ENCODE measurements at regions of chr7 and their contacts with region 1.

Region 1: GRCh38 chr7:37421861-37422500 is 26.7 kb downstream of the ELMO1 start:
- DNase-seq: no peak
- ATAC-seq: no peak
- H3K4me3 ChIP-seq: no peak overlapping the region
- H3K4me3 Mint-ChIP-seq: no peak overlapping the region
- H3K27ac ChIP-seq: no peak overlapping the region
- H3K27ac Mint-ChIP-seq: no peak overlapping the region
- H3K4me1 ChIP-seq: peaks cover 23 to 34% of the 10 kb centered on the region in 2 donors
- H3K4me1 Mint-ChIP-seq: peaks cover 62% of the 10 kb centered on the region
- H3K27me3 ChIP-seq: no peaks in the 10 kb centered on the region
- H3K27me3 Mint-ChIP-seq: no peaks in the 10 kb centered on the region
- CTCF ChIP-seq: no peak

Region 2: DNA sequence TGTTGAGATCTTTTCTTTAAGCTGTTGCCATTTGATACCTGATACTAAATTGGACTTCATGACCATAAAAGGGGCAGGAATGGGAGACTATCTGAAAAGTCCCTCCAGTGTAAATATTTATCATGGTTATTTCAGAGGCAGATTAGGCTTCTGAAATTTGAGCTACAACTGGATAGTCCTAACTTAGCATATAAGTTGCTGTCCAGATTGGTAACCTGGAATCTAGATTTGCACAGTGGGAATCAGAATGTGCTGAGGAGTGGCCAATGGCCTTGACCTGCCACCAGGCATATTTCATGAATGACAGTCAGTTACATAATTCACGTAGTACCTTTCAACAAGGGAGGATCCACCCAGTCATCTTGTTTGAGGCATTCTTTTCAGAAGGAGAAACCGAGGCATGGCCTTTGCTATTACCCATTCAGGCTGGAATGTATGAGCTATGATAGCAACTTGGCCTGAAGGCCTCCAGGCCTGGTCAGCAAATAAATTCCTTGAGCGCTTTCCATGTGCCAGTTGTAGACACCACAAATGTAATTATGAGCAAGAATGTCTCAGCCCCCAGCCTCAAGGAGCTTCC is 1188.9 kb before region 1 on chr7:
- CTCF ChIA-PET with region 1: no interaction called
- POLR2A ChIA-PET with region 1: no interaction called
- intact Hi-C with region 1: no loop called
- DNase-seq: no peak
- ATAC-seq: no peak
- H3K4me3 ChIP-seq: no peak overlapping the region
- H3K4me3 Mint-ChIP-seq: no peak overlapping the region
- H3K27ac ChIP-seq: no peak overlapping the region
- H3K27ac Mint-ChIP-seq: no peak overlapping the region
- H3K4me1 ChIP-seq: no peaks in the 10 kb centered on the region
- H3K4me1 Mint-ChIP-seq: no peaks in the 10 kb centered on the region
- H3K27me3 ChIP-seq: no peaks in the 10 kb centered on the region
- H3K27me3 Mint-ChIP-seq: no peaks in the 10 kb centered on the region
- CTCF ChIP-seq: no peak

Region 3: DNA sequence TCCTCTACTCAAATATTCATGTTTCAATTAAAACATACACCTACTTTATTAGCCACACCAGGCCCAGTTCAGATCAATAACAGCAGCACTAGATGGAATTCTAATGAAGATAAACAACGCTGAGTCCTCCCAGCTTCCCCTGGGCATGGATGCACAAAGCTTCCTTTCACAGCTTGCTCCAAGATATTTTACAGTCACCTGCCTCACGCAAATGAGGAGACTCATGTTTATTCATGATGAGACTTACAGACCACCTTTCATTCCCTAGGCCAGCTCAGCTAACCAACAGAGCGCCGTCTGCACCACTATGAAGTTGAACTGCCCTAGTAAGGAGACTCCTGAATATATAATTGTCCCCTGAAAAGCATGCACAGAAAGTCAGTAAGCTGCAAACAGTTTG is 414.7 kb before region 1 on chr7:
- CTCF ChIA-PET with region 1: no interaction called
- POLR2A ChIA-PET with region 1: no interaction called
- intact Hi-C with region 1: no loop called
- DNase-seq: no peak
- ATAC-seq: no peak
- H3K4me3 ChIP-seq: no peak overlapping the region
- H3K4me3 Mint-ChIP-seq: no peak overlapping the region
- H3K27ac ChIP-seq: no peak overlapping the region
- H3K27ac Mint-ChIP-seq: no peak overlapping the region
- H3K4me1 ChIP-seq: no peaks in the 10 kb centered on the region
- H3K4me1 Mint-ChIP-seq: no peaks in the 10 kb centered on the region
- H3K27me3 ChIP-seq: no peaks in the 10 kb centered on the region
- H3K27me3 Mint-ChIP-seq: no peaks in the 10 kb centered on the region
- CTCF ChIP-seq: no peak

Region 4: GRCh38 chr7:37440738-37441385 is 18.9 kb after region 1 on chr7:
- CTCF ChIA-PET with region 1: interaction called, 3 read pairs
- POLR2A ChIA-PET with region 1: no interaction called
- intact Hi-C with region 1: loop called (anchors 1 kb)
- DNase-seq: peak; percentile 32
- ATAC-seq: peak; percentile 67
- H3K4me3 ChIP-seq: peak overlapping the region in 1 of 5 experiments; percentile 3
- H3K4me3 Mint-ChIP-seq: peak overlapping the region; percentile 66
- H3K27ac ChIP-seq: peak overlapping the region; percentile 42 to 47
- H3K27ac Mint-ChIP-seq: peak overlapping the region; percentile 69
- H3K4me1 ChIP-seq: peaks cover 23 to 25% of the 10 kb centered on the region in 2 donors
- H3K4me1 Mint-ChIP-seq: peaks cover 62% of the 10 kb centered on the region
- H3K27me3 ChIP-seq: no peaks in the 10 kb centered on the region
- H3K27me3 Mint-ChIP-seq: no peaks in the 10 kb centered on the region
- CTCF ChIP-seq: no peak

Region 5: DNA sequence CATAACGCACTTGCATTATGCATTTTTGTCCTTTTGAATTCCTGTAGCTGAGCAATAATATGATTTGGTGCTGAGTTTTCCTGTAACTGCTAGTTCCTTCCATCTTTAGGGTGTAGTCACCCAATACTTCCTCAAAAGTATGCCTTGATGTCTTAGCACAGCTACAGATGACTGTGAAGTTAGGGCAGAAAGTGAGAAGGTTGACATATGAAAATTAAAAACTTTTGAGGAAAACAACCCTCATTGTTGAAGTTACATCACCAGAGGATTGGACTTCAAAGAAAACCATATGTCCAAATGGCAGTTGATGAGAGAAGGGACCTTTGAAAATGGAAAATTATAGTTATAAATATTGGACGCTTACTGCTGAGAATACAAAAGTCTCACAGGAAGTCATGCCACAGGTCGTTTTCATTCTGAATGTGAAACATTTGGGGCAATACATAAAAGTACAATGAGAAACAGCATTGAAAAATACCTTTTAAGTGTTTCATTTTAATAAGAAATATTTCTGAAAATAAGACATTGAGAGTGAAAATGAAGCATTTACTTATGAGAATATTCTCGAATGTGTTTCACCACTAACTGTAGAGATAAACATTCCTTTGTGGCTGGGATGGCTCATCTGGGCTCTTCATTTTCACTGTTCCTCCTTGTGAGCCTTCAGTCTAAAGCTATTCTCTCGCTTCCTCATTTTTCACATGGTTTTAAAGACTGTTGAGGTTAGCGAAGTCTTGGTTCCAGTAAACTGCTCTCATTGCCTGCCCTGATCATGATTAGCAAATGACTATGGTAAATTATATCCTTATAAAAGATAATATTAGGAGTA is 365.0 kb after region 1 on chr7:
- CTCF ChIA-PET with region 1: no interaction called
- POLR2A ChIA-PET with region 1: interaction called, 11 read pairs
- intact Hi-C with region 1: no loop called
- DNase-seq: peak; percentile 72
- ATAC-seq: peak; percentile 87
- H3K4me3 ChIP-seq: peak overlapping the region in 3 of 5 experiments; percentile 1 to 17 (median 13)
- H3K4me3 Mint-ChIP-seq: peak overlapping the region; percentile 89
- H3K27ac ChIP-seq: peak overlapping the region; percentile 59 to 85
- H3K27ac Mint-ChIP-seq: peak overlapping the region; percentile 95
- H3K4me1 ChIP-seq: peaks cover 28 to 39% of the 10 kb centered on the region in 2 donors
- H3K4me1 Mint-ChIP-seq: peaks cover 31% of the 10 kb centered on the region
- H3K27me3 ChIP-seq: no peaks in the 10 kb centered on the region
- H3K27me3 Mint-ChIP-seq: no peaks in the 10 kb centered on the region
- CTCF ChIP-seq: no peak

Measured in B cell (primary cell).